ENCODE measurements at regions of chr5 and their contacts with region 1.

Region 1: DNA sequence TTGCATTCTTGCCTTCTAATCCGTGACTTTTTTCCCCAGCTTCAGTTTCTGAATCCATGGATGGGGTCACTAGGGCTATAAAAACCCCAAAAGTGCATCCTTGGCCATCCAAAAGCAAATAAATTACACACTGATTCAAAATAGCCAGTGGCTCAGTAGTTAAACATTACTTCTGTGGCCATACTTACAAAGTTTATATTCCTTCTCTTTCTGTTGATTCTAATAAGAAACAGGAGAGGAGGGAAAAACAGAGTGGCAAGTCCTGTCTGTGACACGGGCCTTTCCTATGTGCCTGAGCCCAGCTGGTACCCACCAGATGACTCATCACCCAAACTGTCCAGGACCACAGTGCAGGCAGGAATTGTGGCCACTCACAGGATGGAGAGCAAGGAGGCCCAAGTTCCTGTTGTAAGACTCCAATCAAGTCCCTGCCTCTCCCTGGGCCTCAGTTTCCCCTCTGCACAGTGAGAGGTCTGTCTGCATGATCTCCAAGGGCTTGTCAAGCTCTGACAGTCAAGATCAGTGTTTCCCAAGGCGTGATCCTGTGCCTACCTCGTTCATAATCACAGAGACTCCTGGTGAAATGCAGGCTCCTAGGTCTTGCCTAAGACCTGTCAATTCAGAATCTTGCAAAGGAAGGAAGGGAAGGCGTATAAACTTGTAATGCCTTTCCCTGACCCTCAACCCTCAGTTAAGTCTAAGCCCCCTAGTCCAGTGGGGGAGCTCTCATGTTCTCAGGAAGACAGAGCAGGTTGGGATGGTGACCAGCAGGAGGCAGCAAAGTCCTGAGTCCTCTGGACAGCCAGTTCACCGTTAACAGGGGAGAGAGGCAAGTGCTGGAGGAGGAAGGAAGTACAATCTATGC is 29.5 kb downstream of the TNIP1 start:
- DNase-seq: peak; percentile 70 to 85 (median 78)
- ATAC-seq: peak; percentile 97
- H3K4me3 ChIP-seq: no peak overlapping the region
- H3K27ac ChIP-seq: no peak overlapping the region
- H3K4me1 ChIP-seq: no peaks in the 10 kb centered on the region
- H3K27me3 ChIP-seq: no peaks in the 10 kb centered on the region
- CTCF ChIP-seq: peak; percentile 94 to 98 (median 97)
- EP300 ChIP-seq: no peak
- POLR2A ChIP-seq: no peak
- RAD21 ChIP-seq: peak; percentile 96 to 99

Region 2: GRCh38 chr5:150978590-150978989 is 72.7 kb before region 1 on chr5:
- CTCF ChIA-PET with region 1: no interaction called
- POLR2A ChIA-PET with region 1: no interaction called
- in situ Hi-C with region 1: no loop called
- intact Hi-C with region 1: no loop called
- DNase-seq: no peak
- ATAC-seq: no peak
- H3K4me3 ChIP-seq: no peak overlapping the region
- H3K27ac ChIP-seq: no peak overlapping the region
- H3K4me1 ChIP-seq: no peaks in the 10 kb centered on the region
- H3K27me3 ChIP-seq: no peaks in the 10 kb centered on the region
- CTCF ChIP-seq: no peak
- EP300 ChIP-seq: no peak
- POLR2A ChIP-seq: no peak
- RAD21 ChIP-seq: no peak

Region 3: DNA sequence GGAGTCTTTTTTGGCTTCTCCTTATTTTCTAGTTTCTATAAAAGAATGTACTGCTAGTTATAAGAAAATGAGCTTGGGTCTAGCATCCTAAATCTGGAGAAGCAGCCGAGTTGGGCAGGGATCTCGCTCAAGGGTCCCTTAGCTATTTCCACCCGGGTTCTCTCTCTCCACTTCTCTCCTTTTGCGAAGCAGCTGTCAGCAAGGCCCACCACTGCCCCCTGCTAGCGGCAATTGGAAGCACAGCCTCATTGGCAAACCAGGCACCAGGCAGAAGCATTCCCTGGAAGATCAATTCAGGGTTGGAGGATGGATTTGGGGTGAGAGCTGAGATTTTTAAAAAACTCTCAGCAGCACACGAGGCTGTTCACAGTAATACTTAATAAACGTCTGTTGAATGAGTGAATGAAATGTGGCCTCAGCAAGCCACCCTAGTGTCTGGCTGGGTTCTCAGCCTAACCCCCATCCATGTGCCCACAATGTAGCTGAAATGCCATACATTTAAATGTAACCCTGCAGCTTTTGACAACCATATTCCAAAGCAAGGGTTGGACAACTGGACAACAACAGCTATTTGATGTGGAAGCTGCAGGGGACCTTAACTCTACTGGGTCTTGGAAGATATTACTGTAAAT is 64.1 kb after region 1 on chr5:
- CTCF ChIA-PET with region 1: interaction called, 68 read pairs
- POLR2A ChIA-PET with region 1: interaction called, 16 read pairs
- in situ Hi-C with region 1: loop called (anchors 5 kb)
- intact Hi-C with region 1: loop called (anchors 1 kb)
- DNase-seq: peak; percentile 76 to 84 (median 80)
- ATAC-seq: peak; percentile 80
- H3K4me3 ChIP-seq: no peak overlapping the region
- H3K27ac ChIP-seq: no peak overlapping the region
- H3K4me1 ChIP-seq: no peaks in the 10 kb centered on the region; a peak in 1 of 5 replicates
- H3K27me3 ChIP-seq: no peaks in the 10 kb centered on the region
- CTCF ChIP-seq: peak; percentile 95 to 97 (median 95)
- EP300 ChIP-seq: no peak
- POLR2A ChIP-seq: no peak
- RAD21 ChIP-seq: peak; percentile 99 to 100

Region 4: GRCh38 chr5:151239237-151239861 is 188.1 kb after region 1 on chr5:
- CTCF ChIA-PET with region 1: interaction called, 3 read pairs
- POLR2A ChIA-PET with region 1: no interaction called
- in situ Hi-C with region 1: no loop called
- intact Hi-C with region 1: loop called (anchors 2 kb)
- DNase-seq: peak; percentile 75 to 83 (median 78)
- ATAC-seq: peak; percentile 95
- H3K4me3 ChIP-seq: no peak overlapping the region
- H3K27ac ChIP-seq: no peak overlapping the region
- H3K4me1 ChIP-seq: peaks cover 0 to 6% of the 10 kb centered on the region in 2 experiments; a peak in 3 of 5 replicates
- H3K27me3 ChIP-seq: peaks cover 0 to 22% of the 10 kb centered on the region in 2 experiments; a peak in 3 of 5 replicates
- CTCF ChIP-seq: peak; percentile 91 to 94 (median 92)
- EP300 ChIP-seq: no peak
- POLR2A ChIP-seq: no peak
- RAD21 ChIP-seq: peak; percentile 85 to 90

Region 5: DNA sequence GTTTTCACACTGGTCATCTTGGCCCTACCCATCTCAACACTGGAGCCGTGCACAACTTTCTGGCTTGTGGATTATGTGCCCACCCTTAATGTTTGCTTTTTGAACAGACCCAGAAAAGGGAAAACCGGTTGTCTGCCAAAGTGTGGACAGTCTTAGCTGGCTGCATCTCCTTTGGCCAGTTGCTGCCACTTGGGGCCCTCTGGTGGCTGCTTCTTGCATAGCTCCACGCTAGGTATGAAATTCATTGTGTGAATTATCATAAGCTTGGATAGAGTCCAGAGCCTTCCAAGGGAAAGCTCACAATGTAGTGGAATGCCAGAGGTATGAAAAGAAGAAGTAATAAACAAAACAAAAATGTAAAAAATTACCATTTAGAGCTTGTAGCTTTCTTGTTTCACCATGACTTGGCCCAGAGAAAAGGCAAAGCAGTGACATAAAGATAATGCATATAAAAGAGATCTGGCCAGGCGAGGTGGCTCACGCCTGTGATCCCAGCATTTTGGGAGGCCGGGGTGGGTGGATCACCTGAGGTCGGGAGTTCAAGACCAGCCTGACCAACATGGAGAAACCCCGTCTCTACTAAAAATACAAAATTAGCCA is 264.8 kb after region 1 on chr5:
- CTCF ChIA-PET with region 1: interaction called, 3 read pairs
- POLR2A ChIA-PET with region 1: no interaction called
- in situ Hi-C with region 1: no loop called
- intact Hi-C with region 1: loop called (anchors 5 kb)
- DNase-seq: peak; percentile 67 to 71 (median 68)
- ATAC-seq: peak; percentile 98
- H3K4me3 ChIP-seq: no peak overlapping the region
- H3K27ac ChIP-seq: no peak overlapping the region
- H3K4me1 ChIP-seq: no peaks in the 10 kb centered on the region
- H3K27me3 ChIP-seq: peaks cover 0 to 9% of the 10 kb centered on the region in 2 experiments; a peak in 1 of 5 replicates
- CTCF ChIP-seq: peak; percentile 82 to 90 (median 89)
- EP300 ChIP-seq: no peak
- POLR2A ChIP-seq: no peak
- RAD21 ChIP-seq: peak; percentile 70 to 85